ENCODE measurements at regions of chr2 and their contacts with region 1.

Region 1: DNA sequence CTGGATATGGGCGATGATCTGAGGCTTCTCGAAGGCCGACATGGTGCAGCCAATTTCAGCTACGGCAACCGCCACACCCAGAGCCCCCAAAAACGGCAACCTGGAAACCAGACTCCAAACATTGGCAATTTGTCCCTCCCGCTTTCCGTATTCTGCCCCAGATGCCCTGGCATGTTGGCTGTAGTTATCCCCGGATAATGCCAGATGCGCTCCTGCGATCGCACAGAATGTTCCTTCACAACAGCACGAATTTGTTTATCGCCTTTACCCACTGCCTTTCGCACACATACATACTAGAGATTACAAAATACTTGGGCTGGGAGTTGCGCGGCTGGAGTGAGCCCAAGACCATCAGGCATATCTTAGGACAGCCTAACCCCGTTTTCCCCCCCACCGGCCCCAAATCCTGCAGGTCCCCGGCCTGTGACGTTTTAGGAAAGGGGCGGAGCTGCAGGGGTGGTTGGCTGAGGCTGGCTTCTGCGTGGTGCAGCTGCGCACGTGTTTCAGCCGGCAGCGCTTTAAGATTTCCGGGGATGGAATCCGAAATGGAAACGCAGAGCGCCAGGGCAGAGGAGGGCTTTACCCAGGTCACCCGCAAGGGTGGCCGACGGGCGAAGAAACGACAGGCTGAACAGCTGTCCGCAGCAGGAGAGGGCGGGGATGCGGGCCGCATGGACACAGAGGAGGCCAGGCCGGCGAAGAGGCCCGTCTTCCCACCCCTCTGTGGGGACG is at the start of gene PNO1:
- DNase-seq: peak; percentile 98
- H3K4me3 Mint-ChIP-seq: peak within 1 kb of the TSS; percentile 91
- H3K27ac Mint-ChIP-seq: peak within 1 kb of the TSS; percentile 99
- H3K4me1 Mint-ChIP-seq: peaks cover 54% of the 10 kb centered on the region
- H3K27me3 Mint-ChIP-seq: no peaks in the 10 kb centered on the region
- total RNA-seq, gene PNO1: 14.5 to 14.6 TPM

Region 2: DNA sequence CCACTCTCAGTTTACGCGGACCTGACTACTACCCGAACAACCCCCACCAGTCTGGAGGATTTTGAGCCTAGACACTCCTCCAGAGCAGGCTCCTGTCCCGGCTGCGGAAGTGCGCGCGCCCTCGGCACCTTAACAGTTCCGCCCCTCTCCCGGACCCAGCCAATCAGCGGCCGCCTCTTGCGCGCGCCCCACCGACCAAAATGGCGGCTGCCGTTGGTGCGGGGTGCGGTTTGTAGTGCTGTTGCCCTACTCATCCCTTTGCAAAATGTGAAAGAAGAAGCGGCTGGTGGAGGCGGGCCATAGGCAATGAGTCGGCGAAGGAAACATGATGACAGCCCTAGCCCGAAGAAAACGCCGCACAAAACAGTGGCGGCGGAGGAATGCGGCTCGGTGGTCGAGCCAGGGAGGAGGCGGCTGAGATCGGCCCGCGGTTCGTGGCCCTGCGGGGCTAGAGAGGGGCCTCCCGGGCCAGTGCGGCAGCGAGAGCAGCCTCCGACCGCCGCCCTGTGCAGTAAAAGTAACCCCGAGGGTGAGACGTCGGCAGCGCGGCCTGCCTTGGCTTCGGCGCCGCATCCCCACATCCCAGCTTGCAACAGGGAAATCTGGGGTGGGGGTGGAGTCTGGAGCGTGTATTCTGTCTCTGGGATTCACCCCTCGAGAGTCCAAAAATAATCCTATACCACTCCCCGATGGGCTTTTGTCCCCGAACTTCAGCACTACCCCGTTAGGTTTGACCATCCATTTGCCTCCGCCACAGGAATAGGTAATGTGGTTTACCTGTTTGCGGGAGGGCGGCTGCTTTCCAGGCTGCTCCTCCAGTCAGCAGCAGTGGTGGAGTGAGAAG is 760.2 kb before region 1 on chr2 and contains the start of gene ETAA1:
- CTCF ChIA-PET with region 1: no interaction called
- intact Hi-C with region 1: loop called (anchors 2 kb)
- DNase-seq: peak; percentile 95
- H3K4me3 Mint-ChIP-seq: peak within 1 kb of the TSS; percentile 97
- H3K27ac Mint-ChIP-seq: peak within 1 kb of the TSS; percentile 98
- H3K4me1 Mint-ChIP-seq: peaks cover 20% of the 10 kb centered on the region
- H3K27me3 Mint-ChIP-seq: no peaks in the 10 kb centered on the region
- total RNA-seq, gene ETAA1: 12.8 to 14.0 TPM

Region 3: DNA sequence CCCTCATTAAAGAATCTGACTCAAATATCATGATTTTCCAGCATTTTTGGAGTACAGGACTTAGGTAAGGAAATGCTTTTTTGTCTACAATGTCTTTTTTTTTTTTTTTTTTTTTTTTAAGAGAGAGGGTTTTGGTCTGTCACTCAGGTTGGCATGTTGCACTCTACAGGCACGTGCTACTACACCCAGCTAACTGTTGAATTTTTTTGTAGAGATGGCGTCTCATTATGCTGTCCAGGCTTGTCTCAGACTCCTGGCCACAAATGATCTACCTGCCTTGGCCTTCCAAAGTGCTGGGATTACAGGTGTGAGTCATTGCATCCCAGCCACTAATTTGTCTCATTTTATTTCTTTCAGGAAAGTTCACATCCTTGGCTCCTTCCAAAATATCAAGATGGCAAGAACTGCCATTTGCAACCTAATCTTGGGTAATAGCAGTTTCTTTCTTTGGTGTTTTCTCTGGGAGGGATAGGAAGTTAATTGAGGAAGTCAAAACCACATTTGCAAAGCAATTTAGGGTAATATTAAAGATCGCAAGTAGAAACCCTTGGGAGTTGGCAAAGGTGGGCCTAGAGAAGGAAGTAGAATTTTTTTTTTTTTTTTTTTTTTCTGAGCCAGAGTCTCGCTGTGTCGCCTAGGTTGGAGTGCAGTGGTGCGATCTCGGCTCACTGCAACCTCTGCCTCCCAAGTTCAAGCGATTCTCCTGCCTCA is 15.6 kb after region 1 on chr2:
- CTCF ChIA-PET with region 1: interaction called, 4 read pairs
- intact Hi-C with region 1: loop called (anchors 2 kb)
- DNase-seq: no peak
- H3K4me3 Mint-ChIP-seq: no peak overlapping the region
- H3K27ac Mint-ChIP-seq: peak overlapping the region; percentile 41
- H3K4me1 Mint-ChIP-seq: peaks cover 4% of the 10 kb centered on the region
- H3K27me3 Mint-ChIP-seq: no peaks in the 10 kb centered on the region

Region 4: GRCh38 chr2:68203587-68203986 is 46.0 kb after region 1 on chr2:
- CTCF ChIA-PET with region 1: no interaction called
- intact Hi-C with region 1: loop called (anchors 2 kb)
- DNase-seq: peak; percentile 16
- H3K4me3 Mint-ChIP-seq: peak overlapping the region; percentile 55
- H3K27ac Mint-ChIP-seq: peak overlapping the region; percentile 85
- H3K4me1 Mint-ChIP-seq: peaks cover 72% of the 10 kb centered on the region
- H3K27me3 Mint-ChIP-seq: no peaks in the 10 kb centered on the region

Region 5: DNA sequence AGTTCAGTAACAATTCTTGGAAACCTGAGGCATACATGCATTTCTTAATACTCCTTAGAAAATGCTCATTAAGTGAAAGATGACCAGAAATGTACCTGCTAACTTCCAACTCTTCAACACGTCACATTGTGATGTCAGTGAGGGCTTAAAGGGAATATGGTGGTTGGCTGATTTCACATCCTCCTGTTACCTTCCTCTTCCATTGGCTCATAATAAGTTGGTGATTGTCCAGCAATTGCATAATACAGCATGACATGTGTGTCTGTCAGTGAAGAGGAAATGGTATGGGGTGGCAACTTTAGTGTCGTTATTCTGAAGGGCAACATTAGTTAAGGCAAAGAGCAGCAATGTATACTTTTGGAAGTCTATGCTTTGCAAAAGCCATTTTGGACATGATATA is 233.5 kb after region 1 on chr2:
- CTCF ChIA-PET with region 1: no interaction called
- intact Hi-C with region 1: loop called (anchors 1 kb)
- DNase-seq: no peak
- H3K4me3 Mint-ChIP-seq: no peak overlapping the region
- H3K27ac Mint-ChIP-seq: no peak overlapping the region
- H3K4me1 Mint-ChIP-seq: peaks cover 30% of the 10 kb centered on the region
- H3K27me3 Mint-ChIP-seq: peaks cover 2% of the 10 kb centered on the region